ENCODE measurements at regions of chr1 and their contacts with region 1.

Region 1: DNA sequence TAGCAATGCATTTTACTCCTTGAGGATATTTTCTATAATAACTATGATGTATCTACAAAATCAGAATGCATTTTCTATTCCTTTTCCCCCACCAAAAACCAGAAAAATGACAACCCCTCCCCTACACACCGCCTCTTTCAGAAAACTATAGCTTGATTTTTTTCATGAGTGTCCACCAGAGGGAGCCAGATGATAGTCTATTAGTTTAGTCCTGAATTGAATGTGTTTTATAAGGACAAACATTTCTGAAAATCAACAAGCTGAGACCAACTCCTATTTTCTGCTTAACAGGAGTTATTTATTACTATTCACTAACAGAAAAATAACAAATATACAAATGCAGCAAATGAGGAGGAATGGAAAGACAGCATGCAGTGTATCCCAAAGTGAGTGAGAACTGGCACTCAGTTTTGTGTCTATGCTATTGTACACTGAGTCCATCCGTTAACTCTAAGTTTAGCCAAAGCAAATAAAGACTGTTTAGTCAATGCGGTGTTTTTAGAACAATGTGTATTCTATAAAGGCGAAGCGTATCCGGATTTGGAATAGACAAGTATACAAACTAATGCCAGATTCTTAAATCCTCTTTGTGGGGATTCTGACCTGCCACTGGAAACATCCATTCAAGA is 182.6 kb downstream of the VAV3 start:
- DNase-seq: no peak
- ATAC-seq: no peak
- H3K4me3 ChIP-seq: no peak overlapping the region
- H3K27ac ChIP-seq: no peak overlapping the region
- H3K4me1 ChIP-seq: no peaks in the 10 kb centered on the region
- H3K27me3 ChIP-seq: no peaks in the 10 kb centered on the region
- CTCF ChIP-seq: peak; percentile 58; the same call in 1 of the 2 replicates

Region 2: GRCh38 chr1:107724648-107725047 is 57.7 kb before region 1 on chr1:
- CTCF ChIA-PET with region 1: no interaction called
- POLR2A ChIA-PET with region 1: no interaction called
- in situ Hi-C with region 1: no loop called
- intact Hi-C with region 1: no loop called
- DNase-seq: no peak
- ATAC-seq: no peak
- H3K4me3 ChIP-seq: no peak overlapping the region
- H3K27ac ChIP-seq: no peak overlapping the region
- H3K4me1 ChIP-seq: no peaks in the 10 kb centered on the region
- H3K27me3 ChIP-seq: no peaks in the 10 kb centered on the region
- CTCF ChIP-seq: no peak

Region 3: GRCh38 chr1:107851418-107851817 is 69.1 kb after region 1 on chr1:
- CTCF ChIA-PET with region 1: no interaction called
- POLR2A ChIA-PET with region 1: no interaction called
- in situ Hi-C with region 1: no loop called
- intact Hi-C with region 1: no loop called
- DNase-seq: no peak
- ATAC-seq: no peak
- H3K4me3 ChIP-seq: no peak overlapping the region
- H3K27ac ChIP-seq: no peak overlapping the region
- H3K4me1 ChIP-seq: no peaks in the 10 kb centered on the region
- H3K27me3 ChIP-seq: no peaks in the 10 kb centered on the region
- CTCF ChIP-seq: no peak

Region 4: DNA sequence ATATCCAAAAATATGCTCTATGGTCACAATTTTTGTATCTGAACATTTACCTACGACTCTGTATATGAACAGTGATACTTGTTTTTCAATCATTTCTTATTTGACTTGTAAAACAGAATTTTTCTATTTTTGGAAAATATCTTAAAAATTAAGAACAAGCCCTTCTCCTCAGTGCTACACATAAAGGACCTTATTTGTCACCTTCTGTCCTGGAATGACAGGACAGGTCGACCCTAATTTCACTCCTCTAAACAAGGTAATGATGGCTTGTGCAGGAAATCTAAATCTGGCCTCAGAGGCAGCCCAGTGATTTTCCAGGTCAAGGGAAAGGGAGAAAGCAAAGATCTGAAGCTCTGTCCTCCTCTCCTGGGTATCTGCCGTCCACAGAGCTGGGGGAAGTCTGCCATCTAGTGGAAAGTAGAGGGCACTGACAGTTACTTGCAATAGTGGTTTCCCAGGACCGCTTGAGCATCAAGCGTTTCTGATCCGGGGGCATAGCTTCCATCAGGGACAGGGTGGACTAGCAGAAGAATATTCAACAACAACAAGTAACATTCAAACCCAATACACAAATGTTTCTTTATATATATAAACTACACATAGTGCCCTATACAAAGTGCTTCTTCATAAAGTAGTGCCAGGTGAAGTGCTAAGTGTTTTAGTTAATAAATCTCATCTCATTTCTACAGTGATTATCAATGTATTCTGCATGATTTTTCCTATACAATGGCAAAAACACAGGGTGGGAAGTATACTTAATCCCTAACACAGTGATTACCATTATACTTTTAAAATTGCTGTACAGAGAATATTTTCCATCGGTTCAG is 343.2 kb after region 1 on chr1:
- CTCF ChIA-PET with region 1: interaction called, 25 read pairs
- POLR2A ChIA-PET with region 1: no interaction called
- in situ Hi-C with region 1: no loop called
- intact Hi-C with region 1: loop called (anchors 1 kb)
- DNase-seq: peak; percentile 63
- ATAC-seq: peak; percentile 93
- H3K4me3 ChIP-seq: no peak overlapping the region
- H3K27ac ChIP-seq: no peak overlapping the region
- H3K4me1 ChIP-seq: no peaks in the 10 kb centered on the region
- H3K27me3 ChIP-seq: no peaks in the 10 kb centered on the region
- CTCF ChIP-seq: peak; percentile 86